Thyroid gland (tissue), 4 donors: ENCODE measurements at regions of chr5 and their contacts with region 1.

Region 1: DNA sequence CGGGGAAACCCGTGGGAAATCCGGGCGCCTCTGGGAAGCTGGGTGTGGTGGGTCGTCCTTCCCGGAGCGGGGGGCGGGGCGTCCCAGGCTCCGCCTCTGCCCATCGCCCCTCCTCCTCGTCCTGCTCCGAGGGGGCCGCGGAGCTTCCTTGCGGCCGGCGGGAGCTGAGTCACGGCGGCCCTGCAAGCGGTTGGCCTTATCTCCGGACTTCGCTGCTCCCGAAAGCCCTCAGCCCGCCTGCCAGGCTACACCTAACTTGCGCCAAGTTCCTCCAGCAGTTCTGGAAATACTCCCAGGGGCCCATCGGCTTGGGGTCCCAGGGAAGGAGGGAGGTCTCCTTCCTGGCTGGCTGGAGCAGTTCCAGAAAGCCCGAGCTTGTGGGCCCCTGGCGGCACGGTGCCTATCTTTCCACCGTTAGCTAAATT is 54.1 kb upstream of the CDKN2AIPNL start:
- DNase-seq: peak; percentile 87 to 89
- H3K4me3 ChIP-seq: peak overlapping the region in 2 of 3 donors; percentile 34 to 37
- H3K27ac ChIP-seq: peak overlapping the region; percentile 96 to 100 (median 100)
- H3K4me1 ChIP-seq: peaks cover 16 to 38% of the 10 kb centered on the region in 2 donors
- H3K27me3 ChIP-seq: no peaks in the 10 kb centered on the region
- CTCF ChIP-seq: peak in 2 of 6 experiments; percentile 18 to 20
- POLR2A ChIP-seq: peak in 1 of 2 donors; percentile 87

Region 2: GRCh38 chr5:134267366-134268018 is 198.3 kb before region 1 on chr5:
- intact Hi-C with region 1: no loop called
- DNase-seq: no peak
- H3K4me3 ChIP-seq: no peak overlapping the region
- H3K27ac ChIP-seq: no peak overlapping the region
- H3K4me1 ChIP-seq: no peaks in the 10 kb centered on the region
- H3K27me3 ChIP-seq: no peaks in the 10 kb centered on the region
- CTCF ChIP-seq: no peak
- POLR2A ChIP-seq: no peak

Region 3: GRCh38 chr5:134312796-134313195 is 153.0 kb before region 1 on chr5:
- intact Hi-C with region 1: no loop called
- DNase-seq: no peak
- H3K4me3 ChIP-seq: no peak overlapping the region
- H3K27ac ChIP-seq: no peak overlapping the region
- H3K4me1 ChIP-seq: no peaks in the 10 kb centered on the region
- H3K27me3 ChIP-seq: no peaks in the 10 kb centered on the region
- CTCF ChIP-seq: no peak
- POLR2A ChIP-seq: no peak

Region 4: DNA sequence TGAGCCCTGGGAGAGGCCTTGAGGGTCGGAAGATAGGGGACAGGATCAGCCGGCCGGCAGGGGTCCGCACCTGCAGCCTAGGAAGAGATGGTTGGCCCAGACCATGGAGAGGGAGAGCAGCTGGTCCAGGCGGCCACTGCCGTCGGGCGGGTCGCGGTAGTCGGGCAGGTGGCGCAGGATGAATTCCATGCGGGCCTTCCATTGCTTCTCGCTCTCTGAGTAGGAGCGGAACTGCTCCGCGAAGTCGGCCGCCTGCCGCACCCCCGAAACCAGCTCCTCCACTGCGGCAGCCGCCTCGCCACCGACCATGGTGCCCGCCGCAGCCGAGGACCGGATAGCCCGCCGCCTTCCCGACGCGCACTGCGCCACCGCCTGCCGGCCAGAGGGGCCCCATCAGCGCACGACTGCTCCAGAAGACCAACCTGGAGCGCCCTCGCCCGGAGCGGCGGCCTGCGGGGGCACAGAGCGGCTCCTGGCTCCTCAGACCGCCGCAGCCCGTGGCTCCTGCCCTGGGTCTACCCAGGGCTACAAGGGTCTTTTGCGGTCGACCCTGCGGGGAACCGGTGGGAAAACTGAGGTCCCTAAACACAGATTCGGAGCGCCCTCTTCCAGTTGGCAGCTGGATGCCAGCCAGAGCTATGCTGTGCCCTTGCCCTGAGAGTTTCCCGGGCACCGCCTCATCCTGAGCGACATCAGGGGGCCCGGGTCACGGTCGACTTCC is 54.1 kb before region 1 on chr5 and contains the start of gene CDKN2AIPNL:
- intact Hi-C with region 1: loop called (anchors 10 kb)
- DNase-seq: peak; percentile 90 to 93
- H3K4me3 ChIP-seq: peak within 1 kb of the TSS; percentile 55 to 95 (median 88)
- H3K27ac ChIP-seq: peak within 1 kb of the TSS; percentile 80 to 89 (median 86)
- H3K4me1 ChIP-seq: peaks cover 20 to 25% of the 10 kb centered on the region in 2 donors
- H3K27me3 ChIP-seq: no peaks in the 10 kb centered on the region
- CTCF ChIP-seq: peak in 4 of 6 experiments; percentile 59 to 92 (median 80)
- POLR2A ChIP-seq: peak in 1 of 2 donors; percentile 74
- total RNA-seq, gene CDKN2AIPNL: 27.9 to 42.3 (median 34.8) TPM